ENCODE measurements at regions of chr11 and their contacts with region 1.

Region 1: GRCh38 chr11:102495161-102496042 is 35.1 kb downstream of the MMP7 start:
- DNase-seq: peak in 1 of 10 donors; percentile 6
- H3K4me3 ChIP-seq: peak overlapping the region in 35 of 59 donors; percentile 1 to 53 (median 32)
- H3K27ac ChIP-seq: peak overlapping the region in 1 of 59 donors; percentile 3
- H3K27me3 ChIP-seq: peaks cover 0 to 11% (median 0%) of the 10 kb centered on the region in 45 donors
- CTCF ChIP-seq: peak; percentile 66 to 95 (median 84)

Region 2: GRCh38 chr11:102287964-102288724 is 207.3 kb before region 1 on chr11:
- intact Hi-C with region 1: loop called (anchors 2 to 5 kb)
- DNase-seq: peak in 2 of 10 donors; percentile 28 to 45
- H3K4me3 ChIP-seq: peak overlapping the region in 54 of 59 donors; percentile 13 to 62 (median 43)
- H3K27ac ChIP-seq: peak overlapping the region in 4 of 59 donors; percentile 25 to 65 (median 37)
- H3K27me3 ChIP-seq: no peaks in the 10 kb centered on the region
- CTCF ChIP-seq: peak; percentile 68 to 91 (median 82)

Region 3: DNA sequence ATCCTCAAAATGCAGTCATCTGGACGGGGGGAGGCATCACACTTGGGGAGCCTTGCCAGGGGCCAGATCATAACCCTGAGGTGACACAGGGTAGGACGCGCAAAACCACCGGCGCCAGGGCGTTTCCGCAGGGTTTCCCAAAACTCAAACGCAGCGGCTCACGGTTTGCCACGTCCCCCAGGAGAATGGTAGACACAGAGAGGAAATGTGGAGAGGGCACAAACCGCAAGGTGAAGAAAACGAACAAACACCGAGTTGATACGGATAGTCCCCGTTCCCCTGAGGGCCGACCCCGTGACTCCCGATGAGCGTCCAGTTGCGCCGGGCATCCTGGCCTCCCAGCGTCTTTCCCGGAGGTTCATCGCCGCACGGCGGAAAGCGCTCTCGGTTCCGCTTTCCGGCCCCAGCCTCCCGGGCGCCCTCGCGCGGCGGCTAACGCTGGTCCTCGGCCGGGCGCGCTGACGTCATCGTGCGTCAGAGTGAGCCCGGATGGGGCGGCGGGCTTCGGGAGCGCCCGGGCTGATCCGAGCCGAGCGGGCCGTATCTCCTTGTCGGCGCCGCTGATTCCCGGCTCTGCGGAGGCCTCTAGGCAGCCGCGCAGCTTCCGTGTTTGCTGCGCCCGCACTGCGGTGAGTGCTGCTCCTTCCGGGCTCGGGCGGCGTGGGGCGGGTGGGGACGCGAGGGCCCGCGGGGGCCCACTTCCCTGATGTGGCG is 148.5 kb before region 1 on chr11 and contains the start of gene BIRC2:
- intact Hi-C with region 1: loop called (anchors 5 kb)
- DNase-seq: peak; percentile 82 to 97 (median 94)
- H3K4me3 ChIP-seq: peak within 1 kb of the TSS; percentile 69 to 98 (median 87)
- H3K27ac ChIP-seq: peak within 1 kb of the TSS; percentile 52 to 99 (median 98)
- H3K27me3 ChIP-seq: no peaks in the 10 kb centered on the region
- CTCF ChIP-seq: peak; percentile 30 to 90 (median 76)
- total RNA-seq, gene BIRC2: 29.0 to 61.1 (median 39.8) TPM

Region 4: GRCh38 chr11:102384419-102385079 is 110.9 kb before region 1 on chr11:
- intact Hi-C with region 1: loop called in 1 of 2 experiments (anchors 5 kb)
- DNase-seq: no peak
- H3K4me3 ChIP-seq: no peak overlapping the region
- H3K27ac ChIP-seq: no peak overlapping the region
- H3K27me3 ChIP-seq: no peaks in the 10 kb centered on the region
- CTCF ChIP-seq: no peak

Region 5: GRCh38 chr11:102451681-102452460 is 43.5 kb before region 1 on chr11:
- intact Hi-C with region 1: loop called in 1 of 2 experiments (anchors 2 kb)
- DNase-seq: peak; percentile 8 to 77 (median 62)
- H3K4me3 ChIP-seq: peak overlapping the region; percentile 66 to 97 (median 82)
- H3K27ac ChIP-seq: peak overlapping the region; percentile 45 to 99 (median 92)
- H3K27me3 ChIP-seq: peaks cover 0 to 6% (median 0%) of the 10 kb centered on the region in 45 donors
- CTCF ChIP-seq: peak in 51 of 56 donors; percentile 13 to 65 (median 41)

Region 6: GRCh38 chr11:102666331-102666957 is 171.0 kb after region 1 on chr11:
- intact Hi-C with region 1: loop called in 1 of 2 experiments (anchors 2 kb)
- DNase-seq: no peak
- H3K4me3 ChIP-seq: no peak overlapping the region
- H3K27ac ChIP-seq: no peak overlapping the region
- H3K27me3 ChIP-seq: no peaks in the 10 kb centered on the region
- CTCF ChIP-seq: peak; percentile 53 to 89 (median 76)

Region 7: GRCh38 chr11:102771351-102771750 is 275.9 kb after region 1 on chr11:
- intact Hi-C with region 1: no loop called
- DNase-seq: no peak
- H3K4me3 ChIP-seq: no peak overlapping the region
- H3K27ac ChIP-seq: no peak overlapping the region
- H3K27me3 ChIP-seq: peaks cover 0 to 17% (median 0%) of the 10 kb centered on the region in 45 donors
- CTCF ChIP-seq: no peak

Measured in dorsolateral prefrontal cortex (tissue), 120 donors.